GM10248 (cell line): ENCODE measurements at regions of chr14 and their contacts with region 1.

Region 1: GRCh38 chr14:88468396-88468795 is 82.9 kb downstream of the SPATA7 start:
- DNase-seq: no peak
- CTCF ChIP-seq: no peak

Region 2: GRCh38 chr14:88385345-88386101 is 82.9 kb before region 1 on chr14 and contains the start of gene SPATA7:
- CTCF ChIA-PET with region 1: no interaction called
- POLR2A ChIA-PET with region 1: no interaction called
- DNase-seq: peak; percentile 89
- CTCF ChIP-seq: no peak

Region 3: DNA sequence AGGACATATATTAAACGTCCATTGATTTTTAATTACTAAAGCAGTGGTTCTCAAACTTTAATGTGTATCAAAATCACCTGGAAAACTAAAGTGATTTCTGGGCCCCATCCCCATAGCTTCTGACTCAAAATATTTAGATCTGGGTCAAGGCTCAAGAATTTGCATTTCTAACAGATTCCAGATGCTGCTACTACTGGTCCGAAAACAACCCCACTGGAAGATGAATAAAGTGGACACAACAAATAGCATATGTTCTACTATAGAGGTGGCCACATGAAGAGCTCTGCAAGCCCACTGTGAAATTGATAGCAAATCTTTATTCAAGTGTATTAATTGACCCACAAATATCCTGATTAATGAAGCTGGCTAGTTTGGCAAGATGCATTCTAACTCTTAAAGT is 13.5 kb before region 1 on chr14:
- CTCF ChIA-PET with region 1: interaction called, 11 read pairs
- POLR2A ChIA-PET with region 1: no interaction called
- DNase-seq: no peak
- CTCF ChIP-seq: no peak